ENCODE measurements at regions of chr12 and their contacts with region 1.

Region 1: GRCh38 chr12:96399919-96400797 is at the start of gene CDK17:
- DNase-seq: peak; percentile 89
- H3K4me3 ChIP-seq: peak within 1 kb of the TSS; percentile 88 to 99 (median 96)
- H3K27ac ChIP-seq: peak within 1 kb of the TSS; percentile 100
- H3K4me1 ChIP-seq: peaks cover 3 to 43% (median 21%) of the 10 kb centered on the region in 4 donors
- H3K27me3 ChIP-seq: no peaks in the 10 kb centered on the region
- CTCF ChIP-seq: peak in 3 of 5 experiments; percentile 28 to 47 (median 42)
- EP300 ChIP-seq: no peak
- POLR2A ChIP-seq: peak; percentile 82
- total RNA-seq, gene CDK17: 32.5 to 81.4 (median 51.8) TPM

Region 2: GRCh38 chr12:96061864-96062453 is 338.2 kb before region 1 on chr12:
- in situ Hi-C with region 1: loop called (anchors 10 to 25 kb)
- intact Hi-C with region 1: no loop called
- DNase-seq: peak; percentile 83
- H3K4me3 ChIP-seq: no peak overlapping the region
- H3K27ac ChIP-seq: no peak overlapping the region
- H3K4me1 ChIP-seq: no peaks in the 10 kb centered on the region
- H3K27me3 ChIP-seq: no peaks in the 10 kb centered on the region
- CTCF ChIP-seq: peak; percentile 79 to 94 (median 89)
- EP300 ChIP-seq: no peak
- POLR2A ChIP-seq: no peak

Region 3: GRCh38 chr12:96219698-96220206 is 180.4 kb before region 1 on chr12:
- in situ Hi-C with region 1: loop called in 2 of 4 experiments (anchors 10 kb)
- intact Hi-C with region 1: no loop called
- DNase-seq: no peak
- H3K4me3 ChIP-seq: no peak overlapping the region
- H3K27ac ChIP-seq: no peak overlapping the region
- H3K4me1 ChIP-seq: peaks cover 0 to 17% (median 8%) of the 10 kb centered on the region in 4 donors
- H3K27me3 ChIP-seq: no peaks in the 10 kb centered on the region
- CTCF ChIP-seq: no peak
- EP300 ChIP-seq: no peak
- POLR2A ChIP-seq: no peak

Region 4: DNA sequence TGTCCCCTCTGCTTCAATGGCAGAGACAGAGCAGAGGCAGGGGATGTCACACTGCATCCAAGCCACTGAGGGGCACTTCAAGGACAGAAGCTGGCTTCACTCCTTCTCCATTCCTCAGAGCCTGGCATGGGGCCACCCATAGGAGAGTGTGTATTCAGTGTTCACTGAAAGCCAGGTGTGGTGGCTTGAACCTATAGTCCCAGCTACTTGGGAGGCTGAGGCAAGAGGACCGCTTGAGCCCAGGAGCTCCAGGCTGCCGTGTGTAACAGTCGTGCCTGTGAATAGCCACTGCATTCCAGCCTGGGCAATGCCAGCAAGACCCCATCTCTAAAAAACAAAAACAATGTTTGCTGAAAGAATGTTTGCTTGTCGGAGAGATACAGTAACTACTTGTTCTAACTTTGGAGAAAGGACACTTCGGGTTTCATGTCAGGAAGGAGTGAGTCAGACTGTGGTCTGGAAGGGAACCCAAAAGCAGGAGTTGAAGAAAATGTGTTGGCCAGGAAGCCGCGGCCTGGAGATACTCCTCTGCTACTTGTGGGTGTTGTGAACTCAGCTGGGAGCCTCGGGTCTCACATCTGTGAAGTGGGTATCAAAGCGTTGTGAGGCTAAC is 162.6 kb before region 1 on chr12:
- in situ Hi-C with region 1: no loop called
- intact Hi-C with region 1: loop called (anchors 5 kb)
- DNase-seq: peak; percentile 59
- H3K4me3 ChIP-seq: no peak overlapping the region
- H3K27ac ChIP-seq: peak overlapping the region; percentile 69 to 90 (median 86)
- H3K4me1 ChIP-seq: peaks cover 44 to 88% (median 65%) of the 10 kb centered on the region in 4 donors
- H3K27me3 ChIP-seq: no peaks in the 10 kb centered on the region
- CTCF ChIP-seq: no peak
- EP300 ChIP-seq: peak; percentile 65
- POLR2A ChIP-seq: peak; percentile 21

Region 5: DNA sequence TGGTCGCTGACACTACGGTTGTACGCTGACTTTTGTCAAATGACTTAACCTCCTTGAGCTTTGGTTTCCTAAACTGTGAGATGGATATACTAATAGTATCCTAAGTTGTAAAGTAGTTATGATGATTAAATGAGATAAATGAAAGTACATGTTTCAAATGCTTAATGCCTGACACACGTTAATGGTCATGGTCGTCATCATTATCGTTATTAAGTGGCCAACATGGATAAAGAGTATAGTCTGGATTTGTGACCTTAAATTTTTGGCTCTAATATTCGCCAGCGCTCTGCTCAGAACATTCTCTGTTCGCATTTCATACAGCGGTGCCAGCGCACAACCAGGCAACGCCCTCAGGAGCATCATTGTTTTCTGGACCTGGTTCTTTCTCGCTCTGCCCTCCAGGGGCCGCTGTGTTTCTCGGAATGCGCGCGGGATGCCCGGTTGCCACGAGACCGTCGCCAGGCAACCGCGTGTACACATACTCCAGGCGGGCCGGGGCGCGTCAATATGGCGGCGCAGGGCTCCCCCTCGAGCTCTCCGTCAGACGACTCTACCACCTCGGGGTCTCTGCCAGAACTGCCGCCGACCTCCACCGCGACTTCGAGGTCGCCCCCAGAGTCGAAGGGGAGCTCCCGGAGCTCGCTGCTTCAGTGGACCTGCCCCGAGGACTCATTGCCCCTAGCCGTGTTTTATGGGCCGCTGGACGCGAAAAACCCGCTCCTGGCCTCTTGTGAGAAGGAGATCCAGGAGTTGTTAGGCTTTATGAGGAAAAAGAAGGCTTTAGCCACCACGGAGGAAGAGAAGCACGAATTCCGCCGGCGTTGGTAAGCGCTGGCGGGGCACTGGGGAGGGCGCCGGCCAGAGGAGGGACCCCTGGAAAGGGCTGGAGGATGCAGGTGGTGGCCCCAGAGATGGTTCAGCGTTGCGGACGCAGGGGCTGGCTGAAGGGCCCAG is 89.2 kb after region 1 on chr12 and contains the start of gene CFAP54:
- in situ Hi-C with region 1: loop called in 1 of 4 experiments (anchors 10 kb)
- intact Hi-C with region 1: no loop called
- DNase-seq: peak; percentile 92
- H3K4me3 ChIP-seq: peak within 1 kb of the TSS; percentile 40 to 78 (median 58)
- H3K27ac ChIP-seq: peak within 1 kb of the TSS; percentile 36 to 80 (median 78)
- H3K4me1 ChIP-seq: peaks cover 0 to 7% (median 0%) of the 10 kb centered on the region in 4 donors
- H3K27me3 ChIP-seq: peaks cover 4% of the 10 kb centered on the region
- CTCF ChIP-seq: peak; percentile 75 to 83 (median 77)
- EP300 ChIP-seq: peak; percentile 76
- POLR2A ChIP-seq: no peak
- total RNA-seq, gene CFAP54: 0.14 to 22.3 (median 2.1) TPM in 3 of 4 donors, not detected in the other

Measured in transverse colon (tissue), 4 donors.